AG04450 (cell line): ENCODE measurements at regions of chr11 and their contacts with region 1.

Region 1: DNA sequence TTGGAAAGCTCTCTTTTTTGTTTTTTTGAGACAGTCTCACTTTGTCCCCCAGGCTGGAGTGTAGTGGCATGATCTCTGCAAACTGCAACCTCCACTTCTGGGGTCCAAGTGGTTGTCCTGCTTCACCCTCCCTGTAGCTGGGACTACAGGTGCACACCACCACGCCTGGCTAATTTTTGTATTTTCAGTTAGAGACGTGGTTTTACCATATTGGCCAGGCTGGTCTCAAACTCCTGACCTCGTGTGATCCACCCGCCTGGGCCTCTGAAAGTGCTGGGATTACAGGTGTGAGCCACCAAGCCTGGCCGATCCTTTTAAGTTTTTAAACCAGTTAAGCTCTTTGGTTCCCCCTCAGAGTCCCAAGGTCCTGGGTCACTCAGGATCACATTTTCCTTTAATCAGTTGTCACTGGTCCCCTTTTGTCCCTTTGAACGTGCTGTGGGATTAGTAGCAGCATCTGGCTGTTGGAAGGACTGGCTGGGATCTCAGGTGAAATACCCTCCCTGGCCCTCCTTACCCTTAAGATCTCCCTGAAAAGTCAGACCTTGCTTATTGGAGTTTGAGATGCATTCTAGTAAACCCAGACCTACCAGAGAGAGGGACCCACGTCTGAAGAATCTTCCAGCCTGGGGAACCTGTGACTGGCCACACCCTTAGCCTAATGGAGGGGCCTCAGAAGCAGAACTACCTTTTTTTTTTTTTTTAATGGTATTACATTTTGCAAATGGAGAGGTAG is 8.1 kb downstream of the MALAT1 start:
- DNase-seq: peak; percentile 82
- H3K4me3 ChIP-seq: peak overlapping the region; percentile 97
- H3K27ac ChIP-seq: peak overlapping the region; percentile 89
- H3K27me3 ChIP-seq: no peaks in the 10 kb centered on the region
- CTCF ChIP-seq: no peak

Region 2: DNA sequence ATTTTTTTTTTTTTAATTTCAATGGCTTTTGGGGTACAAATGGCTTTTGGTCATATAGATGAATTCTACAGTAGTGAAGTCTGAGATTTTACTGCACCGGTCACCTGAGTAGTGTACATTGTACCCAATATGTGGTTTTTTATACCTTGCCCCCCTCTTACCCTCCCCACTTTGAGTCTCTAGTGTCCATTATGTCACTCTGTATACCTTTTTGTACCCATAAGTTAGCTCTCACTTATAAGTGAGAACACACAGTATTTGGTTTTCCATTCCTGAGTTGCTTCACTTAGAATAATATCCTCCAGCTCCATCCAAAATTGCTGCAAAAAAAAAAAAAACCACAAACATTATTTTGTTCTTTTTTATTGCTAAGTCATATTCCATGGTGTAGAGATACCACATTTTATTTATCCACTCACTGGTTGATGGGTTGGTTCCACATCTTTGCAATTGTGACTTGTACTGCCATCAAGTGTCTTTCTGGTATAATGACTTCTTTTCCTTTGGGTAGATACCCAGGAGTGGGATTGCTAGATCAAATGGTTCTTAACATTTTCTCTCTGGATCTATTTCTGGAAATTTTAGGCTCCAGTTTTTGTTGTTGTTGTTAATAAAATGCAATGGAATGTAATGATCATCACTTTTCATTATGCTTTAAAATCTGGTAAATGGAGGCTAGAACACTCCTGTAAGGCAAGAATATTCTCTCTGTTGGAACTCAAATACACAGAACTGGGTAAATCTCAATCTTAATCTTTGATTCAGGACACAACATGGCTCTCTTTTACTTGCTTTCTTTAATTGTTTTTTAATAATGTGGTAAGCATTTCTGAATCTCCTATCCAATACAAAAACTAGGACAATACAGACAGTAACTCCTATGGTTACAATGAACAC is 74.0 kb before region 1 on chr11:
- CTCF ChIA-PET with region 1: interaction called, 4 read pairs
- POLR2A ChIA-PET with region 1: interaction called, 999 read pairs
- DNase-seq: no peak
- H3K4me3 ChIP-seq: peak overlapping the region; percentile 14; the same call in 1 of the 2 replicates
- H3K27ac ChIP-seq: no peak overlapping the region
- H3K27me3 ChIP-seq: no peaks in the 10 kb centered on the region
- CTCF ChIP-seq: 0 out of 2 replicates have a peak, but pooled peaks have one; percentile 13

Region 3: GRCh38 chr11:65454696-65455456 is 52.1 kb before region 1 on chr11:
- CTCF ChIA-PET with region 1: no interaction called
- POLR2A ChIA-PET with region 1: interaction called, 322 read pairs
- DNase-seq: no peak
- H3K4me3 ChIP-seq: peak overlapping the region; percentile 67
- H3K27ac ChIP-seq: peak overlapping the region; percentile 82
- H3K27me3 ChIP-seq: no peaks in the 10 kb centered on the region
- CTCF ChIP-seq: no peak

Region 4: GRCh38 chr11:65471410-65471762 is 35.6 kb before region 1 on chr11:
- CTCF ChIA-PET with region 1: interaction called, 7 read pairs
- POLR2A ChIA-PET with region 1: interaction called, 657 read pairs
- DNase-seq: no peak
- H3K4me3 ChIP-seq: peak overlapping the region; percentile 31
- H3K27ac ChIP-seq: peak overlapping the region; percentile 97
- H3K27me3 ChIP-seq: no peaks in the 10 kb centered on the region
- CTCF ChIP-seq: peak; percentile 56

Region 5: DNA sequence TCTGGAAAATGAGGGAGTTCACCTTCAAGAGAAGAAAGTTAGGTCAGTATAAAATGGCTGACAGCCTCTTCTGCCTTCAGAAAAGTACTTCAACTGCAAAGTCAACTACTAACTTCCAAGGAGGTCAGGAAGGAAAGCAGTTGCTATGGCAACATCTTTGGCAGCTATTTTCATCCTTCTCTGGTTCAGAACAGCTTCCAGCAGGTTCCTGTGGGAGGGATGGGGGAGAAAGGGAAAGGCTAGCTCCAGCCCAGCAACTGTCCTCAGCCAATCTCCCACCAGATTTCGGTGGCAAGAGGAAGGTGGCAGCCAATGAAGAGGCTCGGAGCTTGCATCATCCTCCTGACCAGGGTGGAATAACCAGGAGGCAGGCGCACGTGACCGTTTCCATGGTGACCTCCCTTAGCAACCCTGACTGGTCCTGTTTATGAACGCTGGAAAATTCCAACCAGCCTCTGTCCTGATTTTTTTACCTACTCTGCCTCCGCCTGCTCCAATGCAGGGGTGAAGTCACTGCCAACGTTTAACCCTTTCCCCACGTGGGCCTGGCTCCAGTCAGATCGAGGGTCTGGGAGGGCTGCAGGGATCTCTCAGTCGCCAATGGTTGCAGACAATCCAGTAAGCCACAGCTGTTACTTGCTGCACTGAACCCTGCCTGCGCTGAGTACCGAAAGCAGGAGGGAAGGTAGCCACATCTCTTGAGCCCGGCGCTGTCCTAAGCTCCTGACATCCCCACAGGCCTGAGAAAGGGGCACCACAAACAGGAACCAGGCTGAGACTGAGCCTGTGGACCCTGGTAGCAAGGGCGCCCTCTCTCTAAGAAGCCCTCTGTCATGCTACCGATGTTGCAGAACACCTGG is 19.3 kb before region 1 on chr11:
- CTCF ChIA-PET with region 1: no interaction called
- POLR2A ChIA-PET with region 1: interaction called, 329 read pairs
- DNase-seq: peak; percentile 100
- H3K4me3 ChIP-seq: peak overlapping the region; percentile 45
- H3K27ac ChIP-seq: peak overlapping the region; percentile 99
- H3K27me3 ChIP-seq: no peaks in the 10 kb centered on the region
- CTCF ChIP-seq: no peak

Region 6: DNA sequence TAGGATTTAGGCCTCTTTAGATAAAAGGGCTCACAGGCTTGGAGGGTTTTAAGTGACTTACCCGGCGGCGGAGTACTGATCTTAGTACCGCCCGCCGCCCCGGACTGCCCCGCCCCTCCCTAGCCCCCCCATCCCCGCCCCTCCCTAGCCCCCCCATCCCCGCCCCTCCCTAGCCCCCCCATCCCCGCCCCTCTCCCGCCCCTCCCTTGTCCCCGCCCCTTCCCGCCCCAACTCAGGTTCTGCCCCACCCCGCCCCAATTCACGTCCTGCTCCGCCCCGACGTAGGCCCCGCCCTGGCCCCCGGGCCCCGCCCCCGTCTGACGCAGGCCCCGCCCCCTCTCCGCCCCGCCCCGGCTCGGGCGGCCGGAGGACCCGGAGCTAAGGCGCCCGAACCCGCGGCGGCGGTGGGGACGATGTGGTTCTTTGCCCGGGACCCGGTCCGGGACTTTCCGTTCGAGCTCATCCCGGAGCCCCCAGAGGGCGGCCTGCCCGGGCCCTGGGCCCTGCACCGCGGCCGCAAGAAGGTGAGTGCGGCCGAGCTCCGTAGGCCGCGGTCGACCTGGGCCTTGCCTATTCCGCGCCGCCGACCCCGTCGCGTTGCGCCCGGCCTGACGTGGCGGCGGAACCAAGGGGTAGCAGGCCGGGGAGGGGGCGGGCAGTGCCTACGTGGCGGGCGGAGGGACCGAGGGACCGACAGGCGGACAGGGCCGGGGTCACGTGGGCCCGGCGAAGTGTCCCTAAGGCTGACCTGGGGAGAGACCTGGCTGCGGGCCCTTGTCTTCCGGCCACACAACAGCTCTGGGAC is 18.0 kb after region 1 on chr11 and contains the start of gene SCYL1:
- CTCF ChIA-PET with region 1: no interaction called
- POLR2A ChIA-PET with region 1: interaction called, 13 read pairs
- DNase-seq: no peak
- H3K4me3 ChIP-seq: peak within 1 kb of the TSS; percentile 92
- H3K27ac ChIP-seq: peak within 1 kb of the TSS; percentile 61
- H3K27me3 ChIP-seq: no peaks in the 10 kb centered on the region
- CTCF ChIP-seq: no peak
- polyA plus RNA-seq, gene SCYL1: 60.9 and 90.0 TPM in 2 replicates

Region 7: DNA sequence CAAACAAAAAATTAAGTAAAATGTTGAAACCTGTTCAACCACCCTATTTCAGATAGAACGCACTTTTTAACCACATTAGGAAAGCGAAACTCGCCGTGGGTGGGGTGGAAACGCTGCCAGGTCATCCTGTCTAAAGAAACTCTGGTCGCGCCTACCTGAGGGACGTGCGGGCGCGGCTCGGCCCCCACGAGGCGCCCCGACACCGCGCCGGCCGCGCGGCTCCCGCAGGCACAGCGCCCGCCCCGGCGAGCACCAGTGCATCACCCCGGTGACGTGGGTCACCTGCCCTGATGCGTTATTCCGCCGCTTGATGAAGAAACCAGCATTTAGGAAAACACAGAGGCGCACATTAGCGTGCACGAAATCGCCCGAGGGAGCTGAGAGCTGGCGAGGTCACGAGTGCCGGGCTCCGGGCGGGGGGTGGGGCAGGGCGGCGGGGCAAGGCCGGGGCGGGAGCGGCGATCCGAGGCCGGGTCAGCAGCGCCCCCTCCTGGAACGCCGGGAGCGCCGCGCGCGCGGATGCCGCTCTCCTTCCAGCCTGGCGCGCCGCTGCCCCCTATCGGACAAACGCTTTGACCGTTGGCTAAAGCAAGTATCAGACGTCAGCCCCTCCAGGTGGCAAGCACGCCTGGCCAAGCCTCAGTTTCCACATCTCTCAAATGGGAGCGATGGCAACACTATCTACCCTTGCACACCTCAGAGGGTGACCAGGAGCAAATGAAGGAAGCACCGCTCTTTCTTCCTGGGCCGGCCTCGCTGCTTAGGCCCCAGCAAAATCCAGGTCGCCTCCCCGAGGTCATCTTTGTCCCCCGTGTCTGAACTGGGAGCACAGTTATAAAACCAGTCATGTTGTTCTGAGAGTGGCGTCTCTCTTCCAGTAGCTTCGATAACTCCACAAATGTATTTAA is 311.2 kb after region 1 on chr11:
- CTCF ChIA-PET with region 1: no interaction called
- POLR2A ChIA-PET with region 1: no interaction called
- DNase-seq: peak; percentile 55
- H3K4me3 ChIP-seq: peak overlapping the region; percentile 77
- H3K27ac ChIP-seq: no peak overlapping the region
- H3K27me3 ChIP-seq: peaks cover 13% of the 10 kb centered on the region
- CTCF ChIP-seq: peak; percentile 93

Region 8: GRCh38 chr11:65833297-65834030 is 326.5 kb after region 1 on chr11 and contains the start of gene SNX32:
- CTCF ChIA-PET with region 1: no interaction called
- POLR2A ChIA-PET with region 1: interaction called, 10 read pairs
- DNase-seq: peak; percentile 78
- H3K4me3 ChIP-seq: peak within 1 kb of the TSS; percentile 85
- H3K27ac ChIP-seq: no peak within 1 kb of the TSS
- H3K27me3 ChIP-seq: peaks cover 29% of the 10 kb centered on the region
- CTCF ChIP-seq: no peak
- polyA plus RNA-seq, gene SNX32: 0.30 and 0.57 TPM in 2 replicates